ENCODE measurements at regions of chr2 and their contacts with region 1.

Region 1: DNA sequence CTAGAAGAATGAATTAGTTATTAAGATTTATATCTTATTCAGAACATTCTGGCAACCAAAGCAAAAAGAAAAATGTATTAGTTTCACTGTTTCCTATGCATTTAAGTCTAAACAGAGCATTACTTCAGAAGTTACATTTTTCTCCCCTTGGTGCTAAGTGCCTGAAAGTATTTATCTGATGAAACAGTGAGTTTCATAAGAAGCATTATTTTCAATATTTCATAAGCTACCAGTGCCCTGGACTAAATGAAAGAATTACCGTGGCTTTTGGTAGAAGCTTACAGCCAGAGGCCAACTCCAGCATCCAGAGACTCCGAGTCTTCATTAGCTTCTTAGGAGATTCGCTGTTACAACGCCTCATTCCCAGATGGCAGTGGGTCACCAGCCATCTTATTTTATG is 97.6 kb downstream of the LYPD6B start:
- DNase-seq: no peak
- ATAC-seq: no peak
- H3K4me3 Mint-ChIP-seq: no peak overlapping the region
- H3K27ac Mint-ChIP-seq: no peak overlapping the region
- H3K4me1 Mint-ChIP-seq: peaks cover 22% of the 10 kb centered on the region
- H3K27me3 Mint-ChIP-seq: no peaks in the 10 kb centered on the region
- CTCF ChIP-seq: no peak

Region 2: GRCh38 chr2:148948868-148949267 is 187.2 kb before region 1 on chr2:
- CTCF ChIA-PET with region 1: no interaction called
- POLR2A ChIA-PET with region 1: no interaction called
- DNase-seq: no peak
- ATAC-seq: no peak
- H3K4me3 Mint-ChIP-seq: no peak overlapping the region
- H3K27ac Mint-ChIP-seq: no peak overlapping the region
- H3K4me1 Mint-ChIP-seq: no peaks in the 10 kb centered on the region
- H3K27me3 Mint-ChIP-seq: no peaks in the 10 kb centered on the region
- CTCF ChIP-seq: no peak

Region 3: DNA sequence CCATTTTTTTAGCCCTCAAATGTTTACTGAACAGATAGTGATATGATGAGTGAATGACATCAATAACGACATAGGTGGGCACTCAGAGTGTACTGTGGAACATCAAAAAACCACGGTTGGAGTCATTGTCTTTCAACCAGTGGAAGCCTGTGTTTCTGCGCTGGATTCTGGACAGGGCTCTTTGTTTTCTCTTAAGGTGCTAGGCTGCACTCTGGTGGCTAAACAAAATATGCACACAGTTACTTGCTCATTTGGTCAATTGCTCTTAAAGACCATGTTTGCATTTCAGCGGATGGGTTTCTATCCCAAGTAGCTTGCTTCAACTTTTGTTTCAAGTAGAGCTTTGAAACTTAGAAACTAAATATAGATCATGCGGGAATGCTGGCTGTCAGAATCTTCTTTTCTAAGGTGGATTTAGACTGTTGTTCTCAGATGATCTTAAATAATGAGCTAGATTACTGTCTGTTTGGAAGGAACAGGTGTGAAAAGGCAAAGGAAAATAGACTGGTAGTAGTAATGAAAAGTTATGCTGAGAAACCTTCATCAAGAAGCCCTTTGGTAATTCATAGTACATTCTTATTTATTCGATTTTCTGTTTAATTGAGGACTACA is 146.1 kb before region 1 on chr2:
- CTCF ChIA-PET with region 1: no interaction called
- POLR2A ChIA-PET with region 1: interaction called, 10 read pairs
- DNase-seq: peak; percentile 41
- ATAC-seq: peak; percentile 93
- H3K4me3 Mint-ChIP-seq: no peak overlapping the region
- H3K27ac Mint-ChIP-seq: no peak overlapping the region; the same call in 1 of the 2 replicates
- H3K4me1 Mint-ChIP-seq: peaks cover 5% of the 10 kb centered on the region; the same call in 1 of the 2 replicates
- H3K27me3 Mint-ChIP-seq: no peaks in the 10 kb centered on the region
- CTCF ChIP-seq: no peak

Region 4: GRCh38 chr2:149000158-149000938 is 135.8 kb before region 1 on chr2:
- CTCF ChIA-PET with region 1: no interaction called
- POLR2A ChIA-PET with region 1: no interaction called
- DNase-seq: no peak
- ATAC-seq: peak; percentile 44
- H3K4me3 Mint-ChIP-seq: peak overlapping the region; percentile 57
- H3K27ac Mint-ChIP-seq: peak overlapping the region; percentile 96
- H3K4me1 Mint-ChIP-seq: peaks cover 51% of the 10 kb centered on the region
- H3K27me3 Mint-ChIP-seq: no peaks in the 10 kb centered on the region
- CTCF ChIP-seq: no peak

Measured in WTC11 (cell line).